ENCODE measurements at regions of chr7 and their contacts with region 1.

Region 1: GRCh38 chr7:25496476-25497368 is 268.4 kb upstream of the NPVF start:
- DNase-seq: peak; percentile 34
- H3K4me3 Mint-ChIP-seq: peak overlapping the region; percentile 60
- H3K27ac Mint-ChIP-seq: peak overlapping the region; percentile 77
- H3K4me1 Mint-ChIP-seq: peaks cover 8% of the 10 kb centered on the region
- H3K27me3 Mint-ChIP-seq: no peaks in the 10 kb centered on the region

Region 2: DNA sequence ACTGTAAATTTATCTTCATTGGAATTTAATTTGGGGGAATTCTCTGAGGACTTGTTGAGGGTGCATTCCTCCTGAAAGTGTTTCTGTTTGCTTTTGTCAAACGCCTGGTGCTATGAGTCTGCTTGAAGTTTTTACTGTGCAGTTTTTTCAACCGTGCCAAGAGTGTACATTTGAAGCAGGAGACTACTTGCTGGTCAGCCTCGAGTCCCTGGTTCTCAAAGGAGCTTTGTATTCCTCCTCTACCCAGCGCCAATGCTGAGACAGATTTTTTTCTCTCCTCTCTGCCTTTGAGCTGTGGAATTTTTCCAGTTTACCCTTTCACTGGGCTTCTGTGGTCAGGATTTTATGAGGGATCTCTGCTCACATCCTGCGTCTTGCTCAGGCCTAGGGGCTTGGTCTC is 1150.6 kb before region 1 on chr7:
- CTCF ChIA-PET with region 1: no interaction called
- intact Hi-C with region 1: no loop called
- DNase-seq: no peak
- H3K4me3 Mint-ChIP-seq: no peak overlapping the region
- H3K27ac Mint-ChIP-seq: no peak overlapping the region
- H3K4me1 Mint-ChIP-seq: no peaks in the 10 kb centered on the region
- H3K27me3 Mint-ChIP-seq: peaks cover 10% of the 10 kb centered on the region

Region 3: DNA sequence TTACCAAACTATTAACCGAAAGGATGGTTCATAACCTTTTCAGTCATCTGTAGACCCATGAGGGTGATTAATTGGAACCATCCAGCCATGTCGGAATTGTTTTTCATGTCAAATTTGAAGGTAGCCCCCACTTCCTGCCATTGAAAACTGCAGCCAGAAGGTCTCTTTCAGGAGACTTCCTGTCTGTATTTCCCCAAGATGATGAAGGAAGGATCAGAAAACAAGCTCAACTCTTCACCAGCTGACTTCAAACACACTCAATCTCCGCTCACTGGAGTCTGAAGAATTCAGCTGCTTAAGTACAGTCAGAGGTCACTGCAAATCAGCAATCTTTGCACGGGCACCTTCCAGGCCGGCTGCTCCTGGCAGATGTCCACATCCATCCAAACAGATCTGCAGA is 23.3 kb after region 1 on chr7:
- CTCF ChIA-PET with region 1: no interaction called
- intact Hi-C with region 1: loop called (anchors 2 kb)
- DNase-seq: peak; percentile 35
- H3K4me3 Mint-ChIP-seq: no peak overlapping the region
- H3K27ac Mint-ChIP-seq: peak overlapping the region; percentile 51
- H3K4me1 Mint-ChIP-seq: peaks cover 45% of the 10 kb centered on the region
- H3K27me3 Mint-ChIP-seq: no peaks in the 10 kb centered on the region

Region 4: GRCh38 chr7:25586513-25586912 is 89.8 kb after region 1 on chr7:
- CTCF ChIA-PET with region 1: no interaction called
- intact Hi-C with region 1: no loop called
- DNase-seq: no peak
- H3K4me3 Mint-ChIP-seq: no peak overlapping the region
- H3K27ac Mint-ChIP-seq: no peak overlapping the region
- H3K4me1 Mint-ChIP-seq: no peaks in the 10 kb centered on the region
- H3K27me3 Mint-ChIP-seq: no peaks in the 10 kb centered on the region